ENCODE measurements at regions of chr2 and their contacts with region 1.

Region 1: GRCh38 chr2:197707316-197708213 is 2.4 kb downstream of the MARS2 start:
- DNase-seq: peak; percentile 43
- H3K4me3 ChIP-seq: peak overlapping the region; percentile 94 to 97
- H3K27ac ChIP-seq: no peak overlapping the region; a peak in 1 of 4 replicates
- H3K4me1 ChIP-seq: peaks cover 8 to 18% of the 10 kb centered on the region in 2 experiments; a peak in 3 of 4 replicates
- H3K27me3 ChIP-seq: no peaks in the 10 kb centered on the region
- CTCF ChIP-seq: peak; percentile 82
- EP300 ChIP-seq: no peak
- RAD21 ChIP-seq: peak; percentile 72

Region 2: GRCh38 chr2:197538412-197538811 is 169.2 kb before region 1 on chr2:
- CTCF ChIA-PET with region 1: no interaction called
- POLR2A ChIA-PET with region 1: no interaction called
- DNase-seq: no peak
- H3K4me3 ChIP-seq: no peak overlapping the region
- H3K27ac ChIP-seq: no peak overlapping the region; a peak in 1 of 4 replicates
- H3K4me1 ChIP-seq: peaks cover 0 to 5% of the 10 kb centered on the region in 2 experiments; a peak in 1 of 4 replicates
- H3K27me3 ChIP-seq: no peaks in the 10 kb centered on the region
- CTCF ChIP-seq: no peak
- EP300 ChIP-seq: no peak
- RAD21 ChIP-seq: no peak

Region 3: DNA sequence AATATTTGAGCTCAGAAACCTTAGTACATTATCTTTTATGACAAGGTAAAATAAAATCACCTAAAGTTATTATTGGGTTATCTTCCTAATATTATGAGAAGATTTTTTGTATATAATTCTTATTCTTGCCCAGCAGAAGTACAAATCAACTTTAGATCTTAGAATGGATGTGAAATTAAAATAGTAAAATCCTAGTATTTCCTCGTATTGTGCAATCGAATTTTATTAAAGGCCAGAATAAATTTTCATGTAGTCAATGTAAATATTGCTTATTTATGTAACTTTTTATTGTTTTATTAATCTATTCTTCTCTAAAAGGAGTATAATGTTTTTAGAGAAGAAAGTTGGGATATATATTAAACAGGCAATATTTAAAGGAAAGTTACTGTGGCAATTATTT is 10.3 kb after region 1 on chr2:
- CTCF ChIA-PET with region 1: interaction called, 19 read pairs
- POLR2A ChIA-PET with region 1: no interaction called
- DNase-seq: no peak
- H3K4me3 ChIP-seq: no peak overlapping the region
- H3K27ac ChIP-seq: no peak overlapping the region
- H3K4me1 ChIP-seq: no peaks in the 10 kb centered on the region
- H3K27me3 ChIP-seq: no peaks in the 10 kb centered on the region
- CTCF ChIP-seq: no peak
- EP300 ChIP-seq: no peak
- RAD21 ChIP-seq: no peak

Measured in SK-N-SH (cell line).